Heart right ventricle (tissue), 16 donors: ENCODE measurements at regions of chrX and their contacts with region 1.

Region 1: DNA sequence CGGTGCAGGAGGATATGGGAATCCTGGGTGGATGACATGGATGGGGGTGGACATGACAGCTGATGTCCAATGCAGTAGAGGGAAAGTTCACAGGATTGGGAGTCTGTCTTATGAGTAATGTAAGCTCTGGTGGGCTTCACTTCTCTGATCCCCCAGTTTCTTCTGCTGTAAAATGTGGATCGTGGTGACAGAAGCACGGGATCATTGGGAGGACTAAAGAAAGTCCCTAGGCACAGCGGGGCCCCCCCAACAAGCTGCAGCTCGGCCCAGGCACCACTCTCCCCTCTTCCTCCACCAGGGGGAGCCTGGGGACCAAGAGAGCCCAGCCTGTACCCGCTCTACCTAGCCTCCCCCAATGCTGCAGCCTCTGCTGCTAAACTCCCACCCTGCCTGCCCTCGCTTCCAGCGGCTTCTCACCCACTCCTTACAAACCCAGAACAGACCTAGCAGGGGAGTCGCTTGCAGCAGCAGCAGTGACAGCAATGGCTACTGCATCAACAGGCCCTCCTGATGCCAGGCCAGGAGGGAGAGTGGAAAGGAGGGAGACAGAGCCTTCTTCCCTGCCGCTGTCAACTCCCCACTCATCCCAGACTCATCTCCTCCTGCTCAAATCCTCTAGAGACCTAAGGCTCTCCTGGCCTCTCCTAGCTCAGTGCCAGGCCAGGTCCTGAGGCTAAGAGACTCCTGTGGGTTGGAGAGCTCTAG is 36.1 kb upstream of the IQSEC2 start:
- DNase-seq: peak; percentile 47 to 58
- ATAC-seq: peak; percentile 58 to 84 (median 76)
- H3K4me3 ChIP-seq: no peak overlapping the region
- H3K27ac ChIP-seq: no peak overlapping the region
- H3K4me1 ChIP-seq: peaks cover 0 to 19% (median 5%) of the 10 kb centered on the region in 9 donors
- H3K27me3 ChIP-seq: peaks cover 0 to 89% (median 5%) of the 10 kb centered on the region in 7 donors
- CTCF ChIP-seq: peak; percentile 34 to 90 (median 68)

Region 2: DNA sequence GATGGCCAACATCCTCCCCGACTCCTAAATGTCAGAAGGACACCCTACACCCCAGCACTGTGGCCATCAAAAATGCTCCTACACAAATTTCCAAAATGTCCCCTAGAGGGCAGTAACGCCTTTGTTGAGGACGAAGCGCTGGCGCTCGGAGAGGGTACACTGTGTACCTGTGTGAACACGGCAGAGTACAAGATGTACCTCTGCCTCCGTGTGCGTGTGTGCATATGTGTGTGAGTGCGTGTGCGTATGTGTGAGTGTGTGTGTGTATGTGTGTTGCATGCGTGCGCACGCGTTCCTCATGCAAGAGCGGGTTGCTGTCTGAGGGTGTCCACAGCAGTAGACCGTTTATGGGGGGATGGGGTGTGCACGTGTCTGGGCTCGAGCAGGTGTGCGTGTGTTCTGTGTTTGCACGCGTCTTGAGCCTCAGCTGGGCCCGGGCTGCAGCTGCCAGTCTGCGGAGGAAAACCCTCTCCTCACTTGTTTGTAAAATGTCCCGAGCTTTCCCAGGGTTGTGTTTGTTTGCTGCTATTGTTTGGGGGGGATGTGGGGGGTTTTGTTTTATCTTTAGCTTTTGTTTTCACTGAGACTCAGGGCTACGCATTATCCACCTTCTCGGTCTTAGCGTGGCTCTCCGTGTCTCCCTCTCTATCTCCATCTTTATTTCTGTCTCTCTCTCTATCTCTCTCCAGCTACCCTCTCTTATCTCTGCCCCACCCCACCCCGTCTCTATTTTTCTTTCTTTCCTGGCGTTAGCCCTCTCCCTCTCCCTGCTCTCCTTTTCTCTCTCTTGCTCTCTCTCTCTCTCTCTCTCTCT is 245.7 kb before region 1 on chrX:
- intact Hi-C with region 1: no loop called
- DNase-seq: peak; percentile 42 to 46
- ATAC-seq: peak; percentile 63 to 96 (median 90)
- H3K4me3 ChIP-seq: peak overlapping the region in 9 of 10 donors; percentile 10 to 55 (median 45)
- H3K27ac ChIP-seq: no peak overlapping the region
- H3K4me1 ChIP-seq: peaks cover 0 to 11% (median 0%) of the 10 kb centered on the region in 9 donors
- H3K27me3 ChIP-seq: peaks cover 0 to 47% (median 0%) of the 10 kb centered on the region in 7 donors
- CTCF ChIP-seq: peak; percentile 34 to 72 (median 69)

Region 3: DNA sequence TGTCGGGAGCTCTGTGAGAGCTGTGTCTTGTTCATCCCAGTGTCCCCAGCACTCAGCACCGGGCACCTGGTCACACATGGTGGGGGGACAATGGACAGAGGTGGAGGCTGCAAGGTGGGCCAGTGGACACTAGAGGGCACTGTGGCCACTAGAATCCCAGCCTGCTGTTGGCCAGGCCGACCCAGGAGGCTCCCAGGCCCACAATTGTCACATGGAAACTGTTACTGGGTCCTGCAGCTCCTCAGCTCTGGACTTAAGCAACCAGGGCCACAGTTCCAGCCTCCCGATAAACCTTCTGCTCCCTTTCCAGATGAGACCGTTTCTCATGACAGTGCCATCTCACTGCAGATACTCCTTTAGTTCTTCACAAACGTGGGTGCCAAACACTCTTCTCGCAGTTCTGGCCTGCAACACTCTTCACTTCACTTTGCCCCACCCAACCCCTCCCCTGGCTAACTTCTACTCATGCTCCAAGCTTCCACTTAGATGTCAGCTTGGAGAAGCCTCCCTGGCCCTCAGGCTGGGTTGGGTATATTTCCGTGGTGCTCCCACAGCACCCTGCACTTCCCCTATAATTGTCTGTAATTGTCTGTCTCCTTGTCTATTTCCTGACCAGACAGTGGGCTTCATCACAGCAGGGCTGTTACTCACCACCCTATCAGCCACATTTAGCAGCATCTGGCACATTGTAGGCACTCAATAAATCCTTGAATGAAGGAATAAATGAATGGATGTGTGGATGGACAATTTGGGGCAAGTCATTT is 32.7 kb before region 1 on chrX:
- intact Hi-C with region 1: loop called in 1 of 10 experiments (anchors 5 kb)
- DNase-seq: peak; percentile 40 to 54
- ATAC-seq: peak in 7 of 8 donors; percentile 28 to 46 (median 35)
- H3K4me3 ChIP-seq: no peak overlapping the region
- H3K27ac ChIP-seq: peak overlapping the region in 1 of 10 donors; percentile 22
- H3K4me1 ChIP-seq: peaks cover 8 to 60% (median 31%) of the 10 kb centered on the region in 9 donors
- H3K27me3 ChIP-seq: peaks cover 0 to 54% (median 0%) of the 10 kb centered on the region in 7 donors
- CTCF ChIP-seq: peak; percentile 52 to 90 (median 76)

Region 4: GRCh38 chrX:53433651-53434639 is 116.4 kb after region 1 on chrX and contains the start of gene HSD17B10:
- intact Hi-C with region 1: loop called in 8 of 10 experiments (anchors 2 to 10 kb)
- DNase-seq: peak; percentile 88 to 89
- ATAC-seq: peak; percentile 97 to 100 (median 99)
- H3K4me3 ChIP-seq: peak within 1 kb of the TSS; percentile 46 to 77 (median 64)
- H3K27ac ChIP-seq: peak within 1 kb of the TSS in 9 of 10 donors; percentile 53 to 83 (median 73)
- H3K4me1 ChIP-seq: peaks cover 0 to 16% (median 4%) of the 10 kb centered on the region in 9 donors
- H3K27me3 ChIP-seq: peaks cover 0 to 60% (median 0%) of the 10 kb centered on the region in 7 donors
- CTCF ChIP-seq: no peak
- total RNA-seq, gene HSD17B10: 43.9 to 126 (median 105) TPM

Region 5: GRCh38 chrX:53441531-53442321 is 124.2 kb after region 1 on chrX:
- intact Hi-C with region 1: loop called in 9 of 10 experiments (anchors 2 to 10 kb)
- DNase-seq: peak; percentile 64 to 83
- ATAC-seq: peak; percentile 80 to 96 (median 92)
- H3K4me3 ChIP-seq: peak overlapping the region; percentile 6 to 53 (median 48)
- H3K27ac ChIP-seq: peak overlapping the region in 4 of 10 donors; percentile 26 to 74 (median 38)
- H3K4me1 ChIP-seq: peaks cover 0 to 26% (median 11%) of the 10 kb centered on the region in 9 donors
- H3K27me3 ChIP-seq: peaks cover 0 to 59% (median 0%) of the 10 kb centered on the region in 7 donors
- CTCF ChIP-seq: no peak

Region 6: GRCh38 chrX:53481816-53482465 is 164.4 kb after region 1 on chrX:
- intact Hi-C with region 1: loop called in 1 of 10 experiments (anchors 5 kb)
- DNase-seq: peak in 1 of 2 donors; percentile 12
- ATAC-seq: no peak
- H3K4me3 ChIP-seq: no peak overlapping the region
- H3K27ac ChIP-seq: no peak overlapping the region
- H3K4me1 ChIP-seq: no peaks in the 10 kb centered on the region
- H3K27me3 ChIP-seq: peaks cover 0 to 55% (median 0%) of the 10 kb centered on the region in 7 donors
- CTCF ChIP-seq: peak in 8 of 9 donors; percentile 10 to 66 (median 49)

Region 7: GRCh38 chrX:55057675-55058249 is 1740.2 kb after region 1 on chrX:
- intact Hi-C with region 1: loop called in 1 of 10 experiments (anchors 5 kb)
- DNase-seq: peak in 1 of 2 donors; percentile 7
- ATAC-seq: peak in 7 of 8 donors; percentile 51 to 79 (median 69)
- H3K4me3 ChIP-seq: peak overlapping the region in 5 of 10 donors; percentile 21 to 33 (median 31)
- H3K27ac ChIP-seq: no peak overlapping the region
- H3K4me1 ChIP-seq: peaks cover 0 to 5% (median 0%) of the 10 kb centered on the region in 9 donors
- H3K27me3 ChIP-seq: peaks cover 0 to 52% (median 0%) of the 10 kb centered on the region in 7 donors
- CTCF ChIP-seq: peak; percentile 50 to 80 (median 75)